ENCODE measurements at regions of chr14 and their contacts with region 1.

Region 1: DNA sequence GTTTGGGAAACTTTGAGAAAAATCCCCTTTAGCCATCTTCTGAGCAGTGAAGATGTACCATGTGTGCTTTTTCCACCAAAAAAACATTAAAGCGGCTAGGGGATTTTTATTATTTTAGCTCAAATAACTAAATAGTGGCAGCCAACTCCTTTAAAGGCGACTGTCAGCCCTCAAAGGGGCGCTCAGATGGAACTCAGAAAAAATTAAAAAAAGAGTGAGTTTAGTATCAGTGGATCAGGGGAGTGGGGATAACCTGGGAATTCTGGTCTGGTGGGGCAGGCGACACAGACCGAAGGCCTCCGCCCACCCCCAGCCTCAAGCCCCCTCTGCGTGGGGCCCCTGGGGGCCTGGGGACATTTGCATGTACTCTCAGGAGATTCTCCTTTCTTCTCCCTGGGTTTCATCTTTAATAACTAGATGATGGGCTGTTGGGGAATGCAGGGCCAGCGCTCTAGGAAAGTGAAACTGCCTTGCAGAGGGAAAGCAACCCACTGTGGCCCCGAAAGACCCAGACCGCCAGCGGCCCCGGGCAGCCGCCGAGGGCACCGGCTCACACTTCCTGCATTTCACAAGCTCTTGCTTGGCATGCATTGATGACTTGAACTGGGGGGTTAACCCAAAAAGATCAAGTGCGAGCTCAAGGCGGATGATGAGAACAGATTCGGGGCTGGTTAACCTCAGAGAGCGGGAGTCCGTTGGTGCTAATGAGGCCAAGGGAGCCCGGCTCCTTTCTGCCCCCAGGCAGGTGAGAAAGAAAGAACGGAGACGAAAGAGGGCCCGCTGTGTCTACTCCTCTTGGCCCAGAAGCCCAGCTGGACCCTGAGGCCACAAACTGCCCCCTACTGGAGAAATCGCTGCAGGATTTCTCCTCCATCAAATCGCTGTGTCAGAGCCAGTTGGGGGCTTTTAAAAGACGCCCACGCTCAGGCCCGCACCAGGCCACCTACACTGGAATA is 7.3 kb upstream of the BATF start:
- DNase-seq: peak; percentile 53
- H3K4me3 Mint-ChIP-seq: peak overlapping the region; percentile 60
- H3K27ac Mint-ChIP-seq: peak overlapping the region; percentile 58
- H3K4me1 Mint-ChIP-seq: peaks cover 22% of the 10 kb centered on the region
- H3K27me3 Mint-ChIP-seq: peaks cover 4% of the 10 kb centered on the region

Region 2: DNA sequence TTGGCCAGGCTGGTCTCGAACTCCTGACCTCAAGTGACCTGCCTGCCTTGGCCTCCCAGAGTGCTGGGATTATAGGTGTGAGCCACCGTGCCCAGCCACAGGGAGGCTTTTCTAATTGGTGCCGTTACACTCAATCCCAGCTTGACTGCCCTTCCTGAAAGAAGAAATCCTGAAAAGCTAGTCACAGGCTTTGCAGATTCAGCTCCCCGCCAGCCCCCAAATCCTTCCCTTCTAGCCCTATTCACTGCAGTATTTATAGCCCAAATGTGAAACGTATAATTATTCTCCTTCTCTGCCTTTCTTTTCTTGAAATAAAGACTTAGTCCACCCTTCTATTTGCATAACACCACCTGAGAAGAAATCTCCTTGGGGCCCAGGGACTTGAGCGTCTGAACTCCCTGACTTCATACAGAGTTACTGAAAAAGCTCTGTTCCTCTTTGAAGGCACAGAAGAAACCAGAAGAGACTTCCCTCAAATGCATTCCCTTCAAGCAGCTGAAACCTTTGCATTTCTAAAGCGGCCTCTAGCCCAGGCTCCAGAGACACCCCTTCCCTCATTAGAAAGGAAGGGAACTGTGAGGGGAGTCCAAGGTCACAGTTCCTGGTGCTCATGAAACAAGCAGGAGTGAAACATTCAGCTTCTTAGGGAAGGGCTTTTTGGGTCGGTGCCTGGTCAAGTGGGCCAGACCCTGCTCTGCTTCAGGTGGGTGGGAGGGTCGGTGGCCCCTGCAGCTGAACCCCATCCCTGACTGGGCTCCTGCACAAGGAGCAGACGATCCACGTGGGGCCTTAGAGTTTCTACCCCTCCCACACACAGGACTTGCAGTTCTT is 35.0 kb before region 1 on chr14:
- CTCF ChIA-PET with region 1: no interaction called
- DNase-seq: no peak
- H3K4me3 Mint-ChIP-seq: no peak overlapping the region
- H3K27ac Mint-ChIP-seq: no peak overlapping the region
- H3K4me1 Mint-ChIP-seq: no peaks in the 10 kb centered on the region
- H3K27me3 Mint-ChIP-seq: peaks cover 21% of the 10 kb centered on the region

Region 3: DNA sequence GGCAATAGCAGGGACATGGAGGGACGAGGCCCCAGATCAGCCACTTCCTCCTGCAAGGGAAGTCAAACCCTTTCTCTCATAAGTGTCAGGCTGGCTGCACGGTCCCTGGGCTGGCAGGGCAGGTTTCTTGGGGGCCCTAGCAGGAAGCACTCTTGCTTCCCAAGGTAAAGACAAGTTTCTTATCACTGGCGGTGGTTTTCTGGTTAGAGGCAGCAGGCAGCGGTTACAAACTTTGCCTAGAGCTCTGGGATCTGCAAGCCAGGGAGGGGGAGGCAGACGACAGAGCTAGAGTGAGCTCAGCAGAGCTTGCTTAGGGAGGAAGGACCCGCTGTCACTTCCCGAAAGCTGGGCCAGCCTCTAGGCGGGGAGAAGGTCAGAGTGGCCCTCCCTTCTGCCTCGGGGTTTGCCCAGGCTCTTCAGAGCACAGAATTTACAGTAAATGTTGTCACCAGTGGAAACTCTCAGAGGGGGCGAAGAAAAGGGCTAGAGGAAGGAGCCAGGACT is 27.7 kb after region 1 on chr14:
- CTCF ChIA-PET with region 1: interaction called, 10 read pairs
- DNase-seq: peak; percentile 77
- H3K4me3 Mint-ChIP-seq: peak overlapping the region; percentile 66
- H3K27ac Mint-ChIP-seq: peak overlapping the region; percentile 96
- H3K4me1 Mint-ChIP-seq: peaks cover 63% of the 10 kb centered on the region
- H3K27me3 Mint-ChIP-seq: no peaks in the 10 kb centered on the region

Region 4: DNA sequence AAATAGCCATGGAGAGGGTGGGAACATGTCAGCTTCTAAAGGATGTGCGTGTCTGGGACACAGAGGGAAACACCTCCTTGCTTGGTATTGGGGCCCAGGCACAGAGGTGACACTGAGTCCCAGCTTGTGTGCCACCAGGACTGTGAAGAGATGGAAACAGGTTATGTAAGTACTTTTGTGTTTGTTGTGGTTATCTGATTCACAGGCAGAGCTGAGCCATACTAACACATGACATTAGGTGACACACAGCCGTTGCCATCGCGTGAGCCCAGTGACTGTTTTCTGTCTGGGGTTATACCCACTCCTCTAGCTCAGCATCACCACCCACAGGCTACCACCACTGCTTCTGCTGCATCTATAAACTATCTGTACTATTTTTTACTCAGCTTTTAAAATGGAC is 51.4 kb after region 1 on chr14:
- CTCF ChIA-PET with region 1: interaction called, 161 read pairs
- DNase-seq: peak; percentile 81
- H3K4me3 Mint-ChIP-seq: no peak overlapping the region
- H3K27ac Mint-ChIP-seq: peak overlapping the region; percentile 90
- H3K4me1 Mint-ChIP-seq: peaks cover 58% of the 10 kb centered on the region
- H3K27me3 Mint-ChIP-seq: no peaks in the 10 kb centered on the region

Region 5: DNA sequence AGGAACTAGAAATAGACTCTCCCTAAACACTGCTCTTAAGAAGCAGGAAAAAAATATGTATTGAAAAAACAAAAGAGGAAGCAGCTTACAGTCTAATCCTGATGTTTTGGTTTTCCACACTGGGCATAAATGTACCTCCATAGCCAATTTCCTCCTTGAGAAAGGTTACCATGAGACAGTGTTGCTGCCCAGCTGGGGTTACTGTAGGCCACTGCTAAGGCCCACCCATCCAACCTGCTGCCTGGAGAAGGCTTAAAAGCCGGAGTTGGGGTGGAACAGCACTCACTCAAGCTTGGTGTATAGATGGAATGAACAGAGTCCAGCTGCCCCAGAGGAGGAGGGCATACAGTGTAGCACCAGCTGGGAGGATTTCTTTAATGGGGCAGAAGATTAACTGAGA is 104.6 kb after region 1 on chr14:
- CTCF ChIA-PET with region 1: no interaction called
- DNase-seq: no peak
- H3K4me3 Mint-ChIP-seq: no peak overlapping the region
- H3K27ac Mint-ChIP-seq: no peak overlapping the region
- H3K4me1 Mint-ChIP-seq: no peaks in the 10 kb centered on the region
- H3K27me3 Mint-ChIP-seq: no peaks in the 10 kb centered on the region

Region 6: DNA sequence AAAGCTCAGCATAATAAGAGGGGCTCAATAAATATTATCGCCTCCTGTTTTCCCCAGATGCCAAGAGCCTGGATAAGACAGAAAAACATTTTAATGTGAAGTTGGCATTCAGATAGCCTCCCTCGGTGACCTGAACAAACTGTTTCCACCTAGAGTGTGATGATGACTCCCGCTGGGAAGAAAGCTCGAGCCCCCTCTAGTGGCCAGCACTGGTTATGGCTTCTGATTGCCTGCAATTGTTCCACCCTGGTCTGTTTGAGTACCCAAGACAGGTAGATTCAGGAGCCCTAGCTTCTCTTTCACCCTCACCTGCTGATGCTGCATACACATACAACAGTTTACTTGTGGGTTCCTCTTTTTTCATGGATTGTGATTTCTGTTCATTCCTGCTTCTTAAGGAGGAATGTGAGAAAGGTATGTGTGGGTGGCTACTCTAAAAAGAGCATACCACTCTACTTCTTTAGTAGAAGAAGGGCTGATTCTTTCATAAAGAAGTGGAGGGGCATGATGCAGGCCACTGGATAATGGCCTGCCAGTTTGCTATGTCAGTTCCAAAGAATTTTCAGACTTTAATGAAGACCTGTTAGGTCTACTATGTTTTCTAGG is 139.3 kb after region 1 on chr14:
- CTCF ChIA-PET with region 1: interaction called, 14 read pairs
- DNase-seq: peak; percentile 87
- H3K4me3 Mint-ChIP-seq: no peak overlapping the region
- H3K27ac Mint-ChIP-seq: peak overlapping the region; percentile 11
- H3K4me1 Mint-ChIP-seq: peaks cover 5% of the 10 kb centered on the region
- H3K27me3 Mint-ChIP-seq: no peaks in the 10 kb centered on the region